ENCODE measurements at regions of chr2 and their contacts with region 1.

Region 1: GRCh38 chr2:162308752-162309503 is 9.6 kb downstream of the IFIH1 start:
- DNase-seq: no peak
- ATAC-seq: peak; percentile 51
- H3K4me3 ChIP-seq: no peak overlapping the region
- H3K27ac ChIP-seq: no peak overlapping the region
- H3K4me1 ChIP-seq: peaks cover 6% of the 10 kb centered on the region
- H3K27me3 ChIP-seq: no peaks in the 10 kb centered on the region
- CTCF ChIP-seq: no peak
- EP300 ChIP-seq: no peak
- POLR2A ChIP-seq: no peak
- RAD21 ChIP-seq: no peak

Region 2: DNA sequence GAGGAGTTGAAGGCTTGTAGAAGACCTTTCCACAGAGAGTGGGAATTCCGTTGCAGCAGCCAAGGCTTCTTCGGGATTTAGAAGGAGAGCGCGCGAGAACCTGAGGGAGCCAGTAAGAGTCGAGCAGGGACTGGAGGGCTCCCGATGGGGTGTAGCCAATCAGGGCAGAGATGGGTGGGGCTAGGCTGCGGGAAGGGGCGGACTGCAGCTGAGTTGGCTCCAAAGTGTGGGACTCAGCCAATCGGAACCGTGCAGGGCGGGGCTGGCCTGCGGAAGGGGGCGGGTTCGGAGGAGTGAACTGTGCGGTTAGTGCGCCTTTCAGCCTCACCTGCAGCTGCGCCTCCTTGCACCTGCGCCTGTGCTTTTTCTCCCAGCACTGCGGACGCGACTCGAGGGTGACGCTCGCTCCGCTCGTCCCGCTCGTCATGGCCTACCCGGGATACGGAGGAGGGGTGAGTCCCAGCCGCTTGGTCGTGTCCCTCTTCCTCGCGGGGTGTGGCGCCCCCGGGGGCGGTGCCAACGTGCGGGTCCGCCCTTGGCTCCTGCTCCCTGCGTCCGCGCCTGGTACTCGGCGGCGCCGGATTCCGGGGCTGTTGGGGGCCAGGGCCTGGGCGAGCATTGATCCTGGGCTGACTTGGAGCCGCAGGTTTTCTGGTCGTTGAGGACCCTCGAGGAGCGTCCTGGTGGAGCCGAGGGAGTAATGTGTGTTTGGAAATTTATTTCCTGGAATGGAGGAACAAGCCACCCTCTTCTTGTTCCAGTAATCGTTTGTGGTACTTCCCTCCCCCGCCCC is 35.1 kb after region 1 on chr2 and contains the start of gene GCA:
- CTCF ChIA-PET with region 1: interaction called, 10 read pairs
- POLR2A ChIA-PET with region 1: interaction called, 3 read pairs
- RAD21 ChIA-PET with region 1: interaction called, 5 read pairs
- SMC1A ChIA-PET with region 1: interaction called, 5 read pairs
- in situ Hi-C with region 1: no loop called
- intact Hi-C with region 1: no loop called
- DNase-seq: peak; percentile 93
- ATAC-seq: peak; percentile 99
- H3K4me3 ChIP-seq: peak within 1 kb of the TSS; percentile 98
- H3K27ac ChIP-seq: peak within 1 kb of the TSS; percentile 71
- H3K4me1 ChIP-seq: no peaks in the 10 kb centered on the region
- H3K27me3 ChIP-seq: no peaks in the 10 kb centered on the region
- CTCF ChIP-seq: no peak
- EP300 ChIP-seq: no peak
- POLR2A ChIP-seq: peak; percentile 89
- RAD21 ChIP-seq: no peak
- polyA plus RNA-seq, gene GCA: 53.5 to 81.9 TPM

Region 3: DNA sequence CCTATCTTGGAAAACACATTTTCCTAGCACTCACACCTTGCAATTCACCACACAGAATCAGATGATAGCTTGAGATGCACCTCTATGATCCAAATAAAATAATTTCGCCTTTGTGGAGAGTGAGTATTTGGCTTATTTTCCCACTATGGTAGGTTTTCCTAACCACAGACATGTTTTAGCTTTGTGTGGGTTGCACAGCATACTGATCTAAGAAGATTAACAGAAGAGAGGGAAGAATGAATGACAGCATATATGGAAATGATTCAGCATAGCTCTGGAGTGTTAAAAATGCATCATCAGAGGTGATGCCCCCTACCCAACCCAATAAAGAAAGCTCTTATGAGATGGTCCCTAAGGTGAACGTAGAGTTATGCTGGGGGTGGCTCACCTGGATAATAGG is 107.5 kb after region 1 on chr2:
- CTCF ChIA-PET with region 1: no interaction called
- POLR2A ChIA-PET with region 1: no interaction called
- RAD21 ChIA-PET with region 1: no interaction called
- SMC1A ChIA-PET with region 1: no interaction called
- in situ Hi-C with region 1: no loop called
- intact Hi-C with region 1: no loop called
- DNase-seq: no peak
- ATAC-seq: no peak
- H3K4me3 ChIP-seq: no peak overlapping the region
- H3K27ac ChIP-seq: no peak overlapping the region
- H3K4me1 ChIP-seq: no peaks in the 10 kb centered on the region
- H3K27me3 ChIP-seq: no peaks in the 10 kb centered on the region
- CTCF ChIP-seq: no peak
- EP300 ChIP-seq: no peak
- POLR2A ChIP-seq: no peak
- RAD21 ChIP-seq: no peak